ENCODE measurements at regions of chr5 and their contacts with region 1.

Region 1: GRCh38 chr5:107571621-107572536 is 98.9 kb downstream of the EFNA5 start:
- DNase-seq: peak; percentile 75
- H3K4me3 ChIP-seq: peak overlapping the region; percentile 22 to 56
- H3K27ac ChIP-seq: peak overlapping the region in 1 of 2 experiments; percentile 39; a peak in 1 of 4 replicates
- H3K4me1 ChIP-seq: peaks cover 6 to 22% of the 10 kb centered on the region in 2 experiments; a peak in 3 of 4 replicates
- H3K27me3 ChIP-seq: no peaks in the 10 kb centered on the region
- CTCF ChIP-seq: peak; percentile 93
- EP300 ChIP-seq: peak in 1 of 2 experiments; percentile 13; a peak in 1 of 4 replicates
- RAD21 ChIP-seq: peak; percentile 84

Region 2: GRCh38 chr5:107501965-107502675 is 69.8 kb before region 1 on chr5:
- CTCF ChIA-PET with region 1: interaction called, 11 read pairs
- POLR2A ChIA-PET with region 1: interaction called, 3 read pairs
- DNase-seq: peak; percentile 39
- H3K4me3 ChIP-seq: peak overlapping the region; percentile 45 to 63
- H3K27ac ChIP-seq: peak overlapping the region; percentile 61 to 97
- H3K4me1 ChIP-seq: peaks cover 11 to 33% of the 10 kb centered on the region in 2 experiments; a peak in 3 of 4 replicates
- H3K27me3 ChIP-seq: no peaks in the 10 kb centered on the region
- CTCF ChIP-seq: no peak
- EP300 ChIP-seq: 0 out of 4 replicates have a peak, but pooled peaks of 1 of the 2 experiments have one; percentile 20
- RAD21 ChIP-seq: no peak

Region 3: DNA sequence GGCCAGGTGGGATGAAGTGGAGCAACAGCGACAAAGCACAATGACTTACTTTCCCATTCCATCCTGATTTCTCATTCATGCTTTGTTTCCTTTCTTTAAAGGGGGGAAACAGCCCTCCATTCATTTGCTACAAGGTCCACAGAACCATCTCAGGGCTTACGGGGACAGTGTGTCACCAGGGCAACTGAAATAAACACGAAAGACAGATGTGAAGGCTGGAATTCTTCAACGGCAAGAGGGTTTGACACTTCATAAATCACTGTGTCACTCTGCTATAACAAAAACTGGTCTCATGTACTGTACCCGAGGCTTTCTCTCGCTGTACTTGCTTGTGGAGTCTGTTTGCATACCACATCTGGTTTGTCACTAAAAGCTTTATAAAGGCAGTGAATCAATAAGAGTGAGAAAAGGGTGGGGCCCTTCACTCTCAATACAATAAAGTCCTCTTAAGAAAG is 52.0 kb before region 1 on chr5:
- CTCF ChIA-PET with region 1: interaction called, 14 read pairs
- POLR2A ChIA-PET with region 1: interaction called, 8 read pairs
- DNase-seq: peak; percentile 28
- H3K4me3 ChIP-seq: no peak overlapping the region
- H3K27ac ChIP-seq: peak overlapping the region in 1 of 2 experiments; percentile 74; a peak in 2 of 4 replicates
- H3K4me1 ChIP-seq: peaks cover 0 to 35% of the 10 kb centered on the region in 2 experiments; a peak in 2 of 4 replicates
- H3K27me3 ChIP-seq: no peaks in the 10 kb centered on the region
- CTCF ChIP-seq: no peak
- EP300 ChIP-seq: peak in 1 of 2 experiments; percentile 96; a peak in 2 of 4 replicates
- RAD21 ChIP-seq: peak; percentile 19; the same call in 1 of the 2 replicates

Region 4: GRCh38 chr5:107604832-107605389 is 33.0 kb after region 1 on chr5:
- CTCF ChIA-PET with region 1: interaction called, 13 read pairs
- POLR2A ChIA-PET with region 1: no interaction called
- DNase-seq: peak; percentile 54
- H3K4me3 ChIP-seq: no peak overlapping the region
- H3K27ac ChIP-seq: peak overlapping the region in 1 of 2 experiments; percentile 71; a peak in 2 of 4 replicates
- H3K4me1 ChIP-seq: peaks cover 0 to 39% of the 10 kb centered on the region in 2 experiments; a peak in 2 of 4 replicates
- H3K27me3 ChIP-seq: no peaks in the 10 kb centered on the region
- CTCF ChIP-seq: no peak
- EP300 ChIP-seq: no peak
- RAD21 ChIP-seq: no peak; the same call in 1 of the 2 replicates

Region 5: GRCh38 chr5:107618242-107618641 is 46.4 kb after region 1 on chr5:
- CTCF ChIA-PET with region 1: interaction called, 16 read pairs
- POLR2A ChIA-PET with region 1: interaction called, 4 read pairs
- DNase-seq: no peak
- H3K4me3 ChIP-seq: no peak overlapping the region
- H3K27ac ChIP-seq: no peak overlapping the region
- H3K4me1 ChIP-seq: peaks cover 0 to 10% of the 10 kb centered on the region in 2 experiments; a peak in 2 of 4 replicates
- H3K27me3 ChIP-seq: no peaks in the 10 kb centered on the region
- CTCF ChIP-seq: no peak
- EP300 ChIP-seq: no peak
- RAD21 ChIP-seq: no peak

Measured in SK-N-SH (cell line).